Transverse colon (tissue), 4 donors: ENCODE measurements at regions of chr2 and their contacts with region 1.

Region 1: DNA sequence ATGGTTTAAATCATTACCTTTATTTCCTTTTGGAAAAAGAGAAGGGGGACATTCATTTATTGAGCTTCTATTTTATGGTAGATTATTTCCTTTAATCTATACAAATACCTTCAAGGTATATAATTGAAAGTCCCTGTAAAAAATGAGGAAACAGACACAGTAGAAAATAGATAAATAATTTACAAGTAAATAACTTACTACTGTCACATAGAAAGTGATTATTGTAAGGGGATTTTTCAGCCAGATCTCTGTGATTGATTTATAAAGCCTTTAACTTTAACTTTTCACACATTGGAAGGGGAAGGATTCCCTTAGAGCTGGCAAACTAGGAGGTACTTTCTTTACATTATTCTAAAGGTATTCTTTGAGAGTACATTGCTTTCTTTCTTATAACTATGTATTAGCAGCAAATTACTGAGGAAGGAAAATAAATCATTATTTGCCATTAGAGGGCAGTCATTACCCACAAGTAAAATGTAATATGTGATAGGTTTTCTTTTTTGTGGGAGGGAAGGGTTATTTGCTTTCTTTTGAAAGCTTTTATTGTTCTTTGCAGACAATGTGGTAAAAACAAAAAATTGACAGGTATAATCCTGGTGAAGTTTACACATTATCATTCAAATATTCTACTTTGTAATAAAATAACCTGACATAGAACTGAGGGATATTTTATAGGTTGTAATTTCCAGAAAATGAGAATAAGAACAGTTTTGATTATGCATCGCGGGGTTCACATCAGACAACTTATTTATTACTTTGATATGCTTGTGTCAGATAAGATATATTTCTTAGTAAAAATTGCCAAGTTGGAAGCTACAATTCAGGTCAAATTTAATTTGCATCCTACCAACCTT is 24.8 kb upstream of the RPE start:
- DNase-seq: no peak
- H3K4me3 ChIP-seq: no peak overlapping the region
- H3K27ac ChIP-seq: no peak overlapping the region
- H3K4me1 ChIP-seq: no peaks in the 10 kb centered on the region
- H3K27me3 ChIP-seq: no peaks in the 10 kb centered on the region
- CTCF ChIP-seq: peak; percentile 46 to 50 (median 48)
- EP300 ChIP-seq: no peak
- POLR2A ChIP-seq: no peak

Region 2: GRCh38 chr2:210195101-210195852 is 217.7 kb after region 1 on chr2:
- in situ Hi-C with region 1: loop called (anchors 5 to 10 kb)
- intact Hi-C with region 1: loop called (anchors 2 kb)
- DNase-seq: no peak
- H3K4me3 ChIP-seq: peak overlapping the region in 1 of 4 donors; percentile 14
- H3K27ac ChIP-seq: no peak overlapping the region
- H3K4me1 ChIP-seq: peaks cover 0 to 5% (median 0%) of the 10 kb centered on the region in 4 donors
- H3K27me3 ChIP-seq: peaks cover 4% of the 10 kb centered on the region
- CTCF ChIP-seq: peak; percentile 64 to 75 (median 64)
- EP300 ChIP-seq: no peak
- POLR2A ChIP-seq: no peak

Region 3: DNA sequence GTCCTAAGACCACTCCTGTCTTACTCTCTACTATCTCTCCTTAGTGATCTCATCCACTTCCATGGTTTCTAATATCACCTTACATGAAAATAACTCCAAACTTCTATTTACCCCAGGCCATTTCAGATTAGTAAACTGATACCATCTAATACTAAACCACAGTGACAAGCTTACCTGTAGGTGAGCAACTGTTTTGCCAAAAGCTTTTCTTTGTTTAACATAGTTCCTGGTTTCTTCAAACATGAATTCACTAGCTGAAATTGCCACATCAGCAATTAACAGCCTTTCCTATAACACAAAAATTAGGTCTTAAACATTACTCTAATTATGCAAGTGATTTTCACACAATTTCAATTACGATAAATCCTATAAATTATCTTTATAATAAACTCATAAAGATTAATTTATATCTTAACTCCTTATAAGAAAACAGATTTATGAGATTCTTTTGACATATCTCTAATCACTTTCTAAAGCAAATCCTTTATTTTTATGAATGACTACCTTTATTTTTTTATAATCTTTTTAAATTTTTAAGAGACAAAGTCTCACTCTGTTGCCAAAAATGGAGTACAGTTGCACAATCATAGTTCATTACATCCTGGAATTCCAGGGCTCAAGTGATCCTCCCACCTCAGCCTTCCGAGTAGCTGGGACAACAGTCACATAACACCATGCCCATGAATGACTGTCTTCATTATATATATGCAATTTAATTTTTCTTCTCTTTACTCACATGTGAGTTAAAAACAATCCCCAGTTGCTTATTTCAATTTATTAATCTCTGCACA is 225.7 kb after region 1 on chr2:
- in situ Hi-C with region 1: loop called (anchors 5 to 10 kb)
- intact Hi-C with region 1: loop called (anchors 2 kb)
- DNase-seq: no peak
- H3K4me3 ChIP-seq: no peak overlapping the region
- H3K27ac ChIP-seq: no peak overlapping the region
- H3K4me1 ChIP-seq: no peaks in the 10 kb centered on the region
- H3K27me3 ChIP-seq: peaks cover 27% of the 10 kb centered on the region
- CTCF ChIP-seq: no peak
- EP300 ChIP-seq: no peak
- POLR2A ChIP-seq: no peak

Region 4: GRCh38 chr2:210421916-210422315 is 444.3 kb after region 1 on chr2:
- in situ Hi-C with region 1: no loop called
- intact Hi-C with region 1: loop called (anchors 5 kb)
- DNase-seq: no peak
- H3K4me3 ChIP-seq: no peak overlapping the region
- H3K27ac ChIP-seq: no peak overlapping the region
- H3K4me1 ChIP-seq: no peaks in the 10 kb centered on the region
- H3K27me3 ChIP-seq: no peaks in the 10 kb centered on the region
- CTCF ChIP-seq: no peak
- EP300 ChIP-seq: no peak
- POLR2A ChIP-seq: no peak